Posterior vena cava (tissue), 2 donors: ENCODE measurements at regions of chr2 and their contacts with region 1.

Region 1: GRCh38 chr2:218406209-218406948 is 6.7 kb downstream of the CTDSP1 start:
- DNase-seq: peak; percentile 99

Region 2: GRCh38 chr2:217872319-217872718 is 534.1 kb before region 1 on chr2:
- intact Hi-C with region 1: no loop called
- DNase-seq: no peak

Region 3: DNA sequence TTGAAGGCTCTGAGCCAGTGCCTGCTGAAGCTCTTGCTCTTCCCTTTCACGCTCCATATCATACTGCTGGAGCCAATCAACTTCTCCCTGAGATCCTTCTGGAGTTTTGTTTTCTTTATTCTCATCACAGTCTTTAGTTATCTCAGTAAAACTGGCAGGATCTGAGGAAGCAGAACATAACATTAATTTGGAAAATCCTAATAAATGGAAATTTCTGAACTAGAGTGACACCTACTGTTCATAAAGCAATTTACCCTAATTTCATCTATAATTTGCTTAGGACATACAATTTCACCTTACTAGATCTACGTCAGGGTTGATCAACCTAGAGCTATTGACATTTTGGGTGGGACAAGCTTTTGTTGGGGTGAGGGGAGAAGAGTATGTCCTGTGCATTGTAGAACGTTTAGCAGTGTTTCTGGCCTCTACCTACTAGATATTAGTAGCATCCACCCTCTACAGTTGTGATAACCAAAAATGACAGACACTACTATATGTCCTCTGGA is 59.7 kb after region 1 on chr2:
- intact Hi-C with region 1: loop called in 1 of 2 experiments (anchors 10 kb)
- DNase-seq: no peak